ENCODE measurements at regions of chr20 and their contacts with region 1.

Region 1: GRCh38 chr20:52410182-52410647 is 218.6 kb upstream of the ZFP64 start:
- DNase-seq: peak; percentile 16 to 89 (median 82)
- H3K4me3 ChIP-seq: peak overlapping the region; percentile 33
- H3K4me3 Mint-ChIP-seq: peak overlapping the region; percentile 45 to 88 (median 78)
- H3K27ac ChIP-seq: peak overlapping the region; percentile 73
- H3K27ac Mint-ChIP-seq: peak overlapping the region; percentile 95 to 99 (median 98)
- H3K4me1 ChIP-seq: peaks cover 73% of the 10 kb centered on the region
- H3K4me1 Mint-ChIP-seq: peaks cover 71 to 90% (median 86%) of the 10 kb centered on the region in 3 donors
- H3K27me3 ChIP-seq: no peaks in the 10 kb centered on the region
- H3K27me3 Mint-ChIP-seq: no peaks in the 10 kb centered on the region

Region 2: GRCh38 chr20:52438324-52438963 is 28.2 kb after region 1 on chr20:
- CTCF ChIA-PET with region 1: interaction called, 12 read pairs
- POLR2A ChIA-PET with region 1: no interaction called
- DNase-seq: peak in 3 of 5 donors; percentile 6 to 53 (median 38)
- H3K4me3 ChIP-seq: no peak overlapping the region
- H3K4me3 Mint-ChIP-seq: peak overlapping the region in 4 of 7 donors; percentile 49 to 76 (median 66)
- H3K27ac ChIP-seq: no peak overlapping the region
- H3K27ac Mint-ChIP-seq: peak overlapping the region in 6 of 8 donors; percentile 51 to 93 (median 76)
- H3K4me1 ChIP-seq: no peaks in the 10 kb centered on the region
- H3K4me1 Mint-ChIP-seq: peaks cover 7 to 13% (median 12%) of the 10 kb centered on the region in 3 donors
- H3K27me3 ChIP-seq: no peaks in the 10 kb centered on the region
- H3K27me3 Mint-ChIP-seq: peaks cover 1 to 10% of the 10 kb centered on the region in 2 donors

Measured in CD8-positive, alpha-beta memory T cell (primary cell).